Heart right ventricle (tissue), 16 donors: ENCODE measurements at regions of chr3 and their contacts with region 1.

Region 1: GRCh38 chr3:72447059-72447946 is 400.9 kb downstream of the SHQ1 start:
- DNase-seq: peak; percentile 92 to 96
- ATAC-seq: peak; percentile 95 to 100 (median 97)
- H3K4me3 ChIP-seq: peak overlapping the region; percentile 52 to 89 (median 78)
- H3K27ac ChIP-seq: peak overlapping the region; percentile 74 to 93 (median 88)
- H3K4me1 ChIP-seq: peaks cover 0 to 45% (median 34%) of the 10 kb centered on the region in 9 donors
- H3K27me3 ChIP-seq: peaks cover 0 to 9% (median 0%) of the 10 kb centered on the region in 7 donors
- CTCF ChIP-seq: no peak

Region 2: GRCh38 chr3:72152551-72153476 is 294.5 kb before region 1 on chr3:
- intact Hi-C with region 1: loop called in 1 of 10 experiments (anchors 10 kb)
- DNase-seq: peak; percentile 75 to 76
- ATAC-seq: peak; percentile 76 to 91 (median 88)
- H3K4me3 ChIP-seq: peak overlapping the region in 7 of 10 donors; percentile 16 to 38 (median 34)
- H3K27ac ChIP-seq: peak overlapping the region in 7 of 10 donors; percentile 31 to 72 (median 59)
- H3K4me1 ChIP-seq: peaks cover 0 to 38% (median 19%) of the 10 kb centered on the region in 9 donors
- H3K27me3 ChIP-seq: no peaks in the 10 kb centered on the region
- CTCF ChIP-seq: no peak

Region 3: GRCh38 chr3:72270072-72270681 is 177.1 kb before region 1 on chr3:
- intact Hi-C with region 1: loop called in 2 of 10 experiments (anchors 5 to 10 kb)
- DNase-seq: peak; percentile 79 to 87
- ATAC-seq: peak; percentile 88 to 95 (median 92)
- H3K4me3 ChIP-seq: no peak overlapping the region
- H3K27ac ChIP-seq: peak overlapping the region in 7 of 10 donors; percentile 14 to 76 (median 40)
- H3K4me1 ChIP-seq: peaks cover 9 to 62% (median 49%) of the 10 kb centered on the region in 9 donors
- H3K27me3 ChIP-seq: no peaks in the 10 kb centered on the region
- CTCF ChIP-seq: no peak

Region 4: GRCh38 chr3:72339116-72340030 is 107.9 kb before region 1 on chr3:
- intact Hi-C with region 1: loop called in 1 of 10 experiments (anchors 10 kb)
- DNase-seq: no peak
- ATAC-seq: peak in 5 of 8 donors; percentile 4 to 61 (median 21)
- H3K4me3 ChIP-seq: no peak overlapping the region
- H3K27ac ChIP-seq: peak overlapping the region in 1 of 10 donors; percentile 36
- H3K4me1 ChIP-seq: peaks cover 0 to 34% (median 15%) of the 10 kb centered on the region in 9 donors
- H3K27me3 ChIP-seq: no peaks in the 10 kb centered on the region
- CTCF ChIP-seq: no peak

Region 5: GRCh38 chr3:72665701-72666443 is 218.6 kb after region 1 on chr3:
- intact Hi-C with region 1: loop called in 1 of 10 experiments (anchors 5 kb)
- DNase-seq: peak in 1 of 2 donors; percentile 15
- ATAC-seq: peak in 7 of 8 donors; percentile 23 to 54 (median 46)
- H3K4me3 ChIP-seq: no peak overlapping the region
- H3K27ac ChIP-seq: no peak overlapping the region
- H3K4me1 ChIP-seq: peaks cover 0 to 1% (median under 1%) of the 10 kb centered on the region in 9 donors
- H3K27me3 ChIP-seq: peaks cover 0 to 4% (median 0%) of the 10 kb centered on the region in 7 donors
- CTCF ChIP-seq: peak; percentile 7 to 66 (median 55)